ENCODE measurements at regions of chr1 and their contacts with region 1.

Region 1: GRCh38 chr1:19672237-19672636 is 7.6 kb downstream of the HTR6 start:
- DNase-seq: no peak

Region 2: DNA sequence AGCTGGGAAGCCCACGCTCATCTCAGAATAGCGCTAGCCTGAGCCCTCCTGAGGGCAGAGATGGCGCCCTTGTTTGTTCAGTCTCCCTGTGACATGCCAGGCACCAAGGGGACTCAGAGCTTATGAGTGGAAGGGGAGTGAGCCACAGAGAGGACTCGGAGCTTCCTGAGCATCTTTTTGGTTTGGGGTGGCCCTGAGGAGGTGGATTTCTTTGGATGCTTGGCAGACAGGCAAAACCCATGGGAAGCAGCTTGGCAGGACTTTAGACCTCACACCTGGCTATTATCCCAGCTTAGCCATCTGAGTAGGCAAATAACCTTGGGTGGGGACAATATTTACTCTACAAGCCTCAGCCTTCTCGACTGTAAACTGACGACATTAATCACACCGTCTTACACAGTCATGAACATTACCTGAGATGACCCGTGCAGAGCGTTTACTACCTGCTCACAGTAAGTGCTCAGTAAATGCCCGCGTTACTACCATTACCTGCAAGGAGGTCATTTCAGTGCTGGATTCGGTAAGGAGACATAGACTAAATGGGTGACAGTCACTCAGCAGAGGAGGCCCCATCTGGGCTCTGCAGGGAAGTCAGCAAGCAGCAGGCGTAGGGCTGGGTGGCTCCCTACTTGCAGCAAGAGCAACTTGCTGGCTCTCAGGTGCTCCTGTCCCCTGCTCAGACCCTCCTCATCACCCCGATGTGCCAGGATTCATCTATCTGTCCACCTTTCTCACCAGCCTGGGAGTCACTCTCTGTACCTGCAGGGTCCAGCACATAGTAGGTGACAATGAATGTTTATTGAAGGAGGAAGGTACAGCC is 1136.6 kb before region 1 on chr1:
- intact Hi-C with region 1: no loop called
- DNase-seq: peak; percentile 29

Region 3: DNA sequence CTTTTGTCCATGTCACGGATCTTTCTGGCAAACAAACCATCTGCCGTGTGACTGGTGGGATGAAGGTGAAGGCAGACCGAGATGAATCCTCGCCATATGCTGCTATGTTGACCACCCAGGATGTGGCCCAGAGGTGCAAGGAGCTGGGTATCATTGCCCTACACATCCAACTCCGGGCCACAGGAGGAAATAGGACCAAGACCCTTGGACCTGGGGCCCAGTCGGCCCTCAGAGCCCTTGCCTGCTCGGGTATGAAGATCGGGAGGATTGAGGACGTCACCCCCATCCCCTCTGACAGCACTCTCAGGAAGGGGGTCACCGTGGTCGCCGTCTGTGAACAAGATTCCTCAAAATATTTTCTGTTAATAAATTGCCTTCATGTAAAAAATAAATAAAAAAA is 64.0 kb before region 1 on chr1:
- intact Hi-C with region 1: loop called in 1 of 2 experiments (anchors 2 kb)
- DNase-seq: peak; percentile 54

Measured in posterior vena cava (tissue), 2 donors.